ENCODE measurements at regions of chr4 and their contacts with region 1.

Region 1: GRCh38 chr4:10096201-10096977 is 20.2 kb downstream of the WDR1 start:
- DNase-seq: peak; percentile 81 to 90
- H3K4me3 ChIP-seq: no peak overlapping the region
- H3K27ac ChIP-seq: peak overlapping the region; percentile 71
- H3K4me1 ChIP-seq: peaks cover 39% of the 10 kb centered on the region
- H3K27me3 ChIP-seq: no peaks in the 10 kb centered on the region
- CTCF ChIP-seq: no peak

Region 2: DNA sequence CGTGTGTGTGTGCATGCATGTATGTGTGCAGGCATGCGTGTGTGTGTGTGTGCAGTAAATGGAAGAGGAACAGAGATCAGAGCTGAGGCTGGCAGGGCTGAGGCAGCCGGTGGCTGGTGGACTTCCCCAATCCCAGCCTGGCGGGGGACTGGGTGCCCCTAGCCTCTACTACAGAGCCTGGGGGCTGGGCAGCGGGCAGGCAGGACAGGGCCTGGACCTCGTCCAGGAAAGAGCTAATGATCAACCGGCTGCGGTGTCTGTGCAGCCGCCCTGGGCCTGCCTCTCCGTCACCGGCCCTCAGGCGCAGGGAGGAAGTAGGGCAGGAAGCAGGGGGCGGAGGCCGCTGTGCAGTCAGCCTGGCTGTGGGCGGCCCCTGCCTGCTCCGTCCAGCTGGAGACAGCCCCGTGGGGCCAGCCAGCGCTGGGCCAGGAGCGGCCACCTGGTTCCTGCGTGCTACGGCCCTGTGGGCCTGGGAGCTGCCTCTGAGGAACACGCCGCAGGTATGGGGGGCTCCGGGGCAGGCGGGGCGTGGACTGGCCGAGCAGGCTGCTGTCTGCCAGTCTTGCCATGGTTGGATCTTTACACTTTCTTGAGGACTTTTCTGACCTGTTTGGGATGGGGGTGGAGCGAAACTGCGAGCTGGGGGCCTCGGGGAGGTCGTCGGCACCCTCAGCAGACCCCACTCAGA is 1897.3 kb before region 1 on chr4 and contains the start of gene SH3TC1:
- CTCF ChIA-PET with region 1: no interaction called
- POLR2A ChIA-PET with region 1: no interaction called
- intact Hi-C with region 1: no loop called
- DNase-seq: peak; percentile 75 to 88
- H3K4me3 ChIP-seq: peak within 1 kb of the TSS; percentile 63
- H3K27ac ChIP-seq: 0 out of 2 replicates have a peak within 1 kb of the TSS, but pooled peaks have one; percentile 39
- H3K4me1 ChIP-seq: peaks cover 40% of the 10 kb centered on the region
- H3K27me3 ChIP-seq: no peaks in the 10 kb centered on the region
- CTCF ChIP-seq: no peak
- total RNA-seq, gene SH3TC1: 5.2 and 11.2 TPM in 2 replicates

Region 3: GRCh38 chr4:10033191-10033881 is 63.1 kb before region 1 on chr4:
- CTCF ChIA-PET with region 1: no interaction called
- POLR2A ChIA-PET with region 1: interaction called, 3 read pairs
- intact Hi-C with region 1: loop called (anchors 1 kb)
- DNase-seq: peak; percentile 16 to 63
- H3K4me3 ChIP-seq: no peak overlapping the region; the same call in 1 of the 2 replicates
- H3K27ac ChIP-seq: peak overlapping the region; percentile 85
- H3K4me1 ChIP-seq: peaks cover 36% of the 10 kb centered on the region
- H3K27me3 ChIP-seq: no peaks in the 10 kb centered on the region
- CTCF ChIP-seq: no peak

Region 4: DNA sequence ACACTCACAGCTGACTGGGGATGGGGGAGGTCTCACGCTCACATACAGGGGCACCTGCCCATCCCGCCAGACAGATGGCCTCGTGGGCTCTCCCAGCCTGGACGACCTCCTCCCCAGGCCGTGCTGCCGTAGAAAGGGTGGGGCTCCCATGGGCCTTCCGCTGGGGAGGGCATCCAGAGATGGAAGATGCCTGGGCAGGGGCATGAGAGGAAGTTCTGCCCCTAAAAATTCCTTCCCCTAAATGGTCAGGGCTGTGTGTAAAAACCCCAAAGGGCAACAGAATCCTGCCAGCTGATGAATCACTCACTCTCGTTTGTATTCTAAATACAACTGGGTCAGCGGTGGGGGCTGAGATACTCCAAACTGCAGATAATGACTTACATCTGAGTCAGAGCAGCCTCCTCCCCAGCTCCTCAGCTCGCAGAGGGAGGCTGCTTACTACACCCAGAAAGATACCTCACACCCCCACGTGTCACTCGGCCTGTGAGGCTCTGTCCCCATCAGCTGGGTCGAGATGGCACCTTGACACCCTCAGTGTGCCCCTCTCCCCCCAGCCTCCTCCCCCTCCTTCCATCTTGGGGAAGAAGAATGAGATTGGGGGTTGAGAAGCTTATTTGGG is 10.1 kb after region 1 on chr4:
- CTCF ChIA-PET with region 1: no interaction called
- POLR2A ChIA-PET with region 1: interaction called, 16 read pairs
- intact Hi-C with region 1: no loop called
- DNase-seq: peak; percentile 76 to 93
- H3K4me3 ChIP-seq: peak overlapping the region; percentile 24; the same call in 1 of the 2 replicates
- H3K27ac ChIP-seq: peak overlapping the region; percentile 67
- H3K4me1 ChIP-seq: peaks cover 26% of the 10 kb centered on the region
- H3K27me3 ChIP-seq: no peaks in the 10 kb centered on the region
- CTCF ChIP-seq: no peak